Right ventricle myocardium inferior (tissue), 1 donor: ENCODE measurements at regions of chr7 and their contacts with region 1.

Region 1: DNA sequence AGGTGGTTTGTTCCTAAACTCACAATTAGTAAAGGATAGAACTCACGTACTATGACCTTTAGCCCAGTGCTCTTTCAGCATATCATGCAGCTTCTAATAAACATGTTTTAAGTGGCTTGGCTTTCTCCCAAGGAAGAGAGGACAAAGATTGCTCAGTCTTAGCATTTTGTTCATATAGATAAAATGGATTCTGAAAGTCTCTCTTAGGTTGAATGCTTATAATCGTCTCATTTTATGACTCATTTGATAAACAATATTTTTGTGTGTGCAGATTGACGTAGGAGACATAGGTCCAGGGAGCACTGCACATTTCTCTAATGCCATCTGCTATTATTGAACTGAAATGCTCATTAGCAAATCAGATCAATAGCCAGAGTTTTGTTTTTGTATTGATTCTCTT is 44.8 kb downstream of the GNAT3 start:
- DNase-seq: no peak
- ATAC-seq: peak; percentile 80

Region 2: GRCh38 chr7:80189638-80190037 is 277.4 kb before region 1 on chr7:
- intact Hi-C with region 1: no loop called
- DNase-seq: no peak
- ATAC-seq: no peak

Region 3: DNA sequence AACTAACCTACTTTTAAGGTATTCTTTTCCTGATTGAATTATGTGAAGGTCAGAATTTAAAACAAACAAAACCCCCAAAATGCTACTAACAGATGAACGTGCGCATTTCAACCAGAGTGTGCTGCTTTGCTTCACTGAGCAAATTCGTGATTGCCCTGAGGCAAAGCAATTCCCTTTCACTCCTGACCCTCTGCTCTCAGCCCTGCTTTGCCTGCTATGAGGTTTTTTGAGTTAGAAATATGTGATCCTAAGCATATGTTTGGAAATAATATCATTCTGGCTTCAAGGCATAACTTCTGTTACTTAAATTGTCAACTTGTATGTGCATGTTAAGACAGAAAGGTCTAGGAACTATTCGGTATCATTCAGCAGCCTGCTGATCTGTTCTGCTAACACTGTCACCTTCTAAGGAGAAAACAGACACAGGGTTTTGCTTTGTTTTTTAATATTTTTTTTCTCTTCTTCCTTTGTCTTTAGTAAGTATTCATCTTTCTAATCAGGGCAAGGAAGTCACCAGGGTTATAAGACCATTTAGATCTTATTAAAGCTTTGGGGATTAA is 79.4 kb before region 1 on chr7:
- intact Hi-C with region 1: no loop called
- DNase-seq: no peak
- ATAC-seq: no peak

Region 4: DNA sequence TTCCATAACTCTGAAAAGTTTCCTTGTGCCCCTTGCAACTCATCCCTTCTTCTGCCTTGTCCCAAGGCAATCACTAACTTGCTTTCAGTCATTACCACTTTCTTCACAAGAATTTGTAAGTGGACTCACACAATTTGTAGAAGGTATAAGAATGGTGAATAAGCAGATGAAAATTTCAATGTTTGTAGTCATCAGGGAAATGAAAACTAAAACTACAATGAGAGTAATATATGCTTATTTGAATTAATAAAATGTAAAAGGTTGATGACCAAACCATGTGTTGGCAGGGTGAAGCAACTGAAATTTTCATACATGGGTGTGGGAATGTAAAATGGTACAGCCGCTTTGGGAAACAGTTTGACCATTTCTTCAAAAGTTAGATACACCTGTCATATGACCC is 34.9 kb before region 1 on chr7:
- intact Hi-C with region 1: no loop called
- DNase-seq: no peak
- ATAC-seq: no peak

Region 5: GRCh38 chr7:80591654-80592053 is 124.6 kb after region 1 on chr7:
- intact Hi-C with region 1: no loop called
- DNase-seq: no peak
- ATAC-seq: no peak

Region 6: GRCh38 chr7:80609751-80610150 is 142.7 kb after region 1 on chr7:
- intact Hi-C with region 1: loop called (anchors 5 kb)
- DNase-seq: no peak
- ATAC-seq: peak; percentile 80